ENCODE measurements at regions of chr10 and their contacts with region 1.

Region 1: DNA sequence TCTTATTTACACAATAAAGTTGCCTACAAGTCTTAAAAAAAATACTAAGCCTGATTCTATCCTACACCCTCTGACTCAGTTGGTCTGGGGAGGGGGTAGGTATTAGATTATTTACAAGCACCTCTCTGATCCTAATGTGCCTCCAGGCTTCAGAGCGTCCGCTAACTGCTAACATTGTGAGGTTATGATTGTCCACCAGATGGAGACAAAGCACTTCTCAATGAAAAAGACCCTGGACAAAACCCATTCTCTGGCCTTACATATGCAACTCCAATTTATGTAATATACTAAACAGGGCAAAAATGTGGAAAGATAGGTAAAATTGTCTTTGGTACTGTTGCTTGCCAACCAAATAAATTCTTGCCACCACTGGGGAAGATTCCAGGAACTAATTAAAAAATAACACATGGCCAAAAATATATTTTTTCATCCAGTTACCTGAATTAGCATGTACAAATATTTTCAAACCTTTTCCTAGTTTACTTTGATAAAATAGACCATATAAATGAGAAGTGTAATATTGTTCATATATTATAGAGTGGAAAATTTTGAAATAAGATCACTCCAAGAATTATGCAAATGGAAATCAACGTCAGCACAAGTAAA is 92.4 kb downstream of the KIF20B start:
- DNase-seq: no peak

Region 2: GRCh38 chr10:89751231-89751630 is 42.5 kb before region 1 on chr10:
- intact Hi-C with region 1: no loop called
- DNase-seq: no peak

Region 3: DNA sequence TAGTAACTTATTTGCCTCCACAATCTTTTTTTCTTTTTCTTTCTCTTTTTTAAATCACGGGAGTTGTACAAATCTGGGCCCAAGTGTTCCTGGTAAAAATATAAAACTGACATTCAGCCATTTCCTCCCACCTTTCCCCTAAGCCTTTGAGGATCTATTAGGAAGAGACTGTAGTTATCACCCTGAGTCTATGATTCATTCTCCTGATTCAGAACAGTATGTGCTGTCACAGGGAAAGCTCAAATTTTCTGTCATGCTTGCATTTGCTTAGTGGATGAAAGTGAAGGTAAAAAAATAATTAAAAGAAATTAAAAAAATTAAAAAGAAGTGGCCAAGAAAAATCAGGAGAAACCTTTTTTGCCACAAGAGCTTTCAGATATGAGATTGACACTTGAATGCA is 20.7 kb before region 1 on chr10:
- intact Hi-C with region 1: no loop called
- DNase-seq: no peak

Region 4: DNA sequence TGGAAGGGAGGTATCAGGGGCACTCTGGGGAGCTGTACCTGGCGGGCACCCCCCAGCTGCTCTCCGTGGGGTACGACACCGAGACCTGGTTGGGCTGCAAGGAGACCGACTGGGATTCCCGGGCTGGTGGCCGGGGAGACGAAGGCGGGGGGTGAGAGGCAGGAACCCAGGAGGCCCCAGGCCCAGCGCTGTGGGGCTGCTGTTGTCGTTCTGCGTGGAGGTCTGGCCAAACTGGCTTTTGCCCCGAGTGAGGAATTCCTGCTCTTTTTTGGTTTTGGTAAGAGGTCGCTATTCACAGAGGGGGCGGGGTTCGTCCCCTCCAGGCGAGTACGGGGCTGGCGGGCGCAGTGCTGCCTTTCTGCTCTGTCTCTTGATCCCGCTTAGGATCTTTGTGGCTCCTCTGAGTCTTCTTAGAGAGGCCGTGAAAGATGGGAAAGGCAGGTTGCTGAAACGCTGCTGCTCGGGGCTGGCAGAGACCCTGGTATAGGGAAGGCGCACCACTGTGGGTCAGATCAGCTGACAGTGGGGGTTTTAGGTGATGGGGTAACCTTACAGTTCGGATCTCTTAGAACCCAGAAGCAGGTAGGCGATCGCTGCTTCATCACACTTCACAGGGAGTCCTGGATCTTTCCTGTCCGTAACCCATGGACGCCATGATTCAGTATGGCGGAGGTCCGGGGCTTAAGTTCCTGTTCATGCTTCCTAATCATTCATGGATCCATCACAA is 44.3 kb after region 1 on chr10:
- intact Hi-C with region 1: no loop called
- DNase-seq: peak; percentile 81

Region 5: DNA sequence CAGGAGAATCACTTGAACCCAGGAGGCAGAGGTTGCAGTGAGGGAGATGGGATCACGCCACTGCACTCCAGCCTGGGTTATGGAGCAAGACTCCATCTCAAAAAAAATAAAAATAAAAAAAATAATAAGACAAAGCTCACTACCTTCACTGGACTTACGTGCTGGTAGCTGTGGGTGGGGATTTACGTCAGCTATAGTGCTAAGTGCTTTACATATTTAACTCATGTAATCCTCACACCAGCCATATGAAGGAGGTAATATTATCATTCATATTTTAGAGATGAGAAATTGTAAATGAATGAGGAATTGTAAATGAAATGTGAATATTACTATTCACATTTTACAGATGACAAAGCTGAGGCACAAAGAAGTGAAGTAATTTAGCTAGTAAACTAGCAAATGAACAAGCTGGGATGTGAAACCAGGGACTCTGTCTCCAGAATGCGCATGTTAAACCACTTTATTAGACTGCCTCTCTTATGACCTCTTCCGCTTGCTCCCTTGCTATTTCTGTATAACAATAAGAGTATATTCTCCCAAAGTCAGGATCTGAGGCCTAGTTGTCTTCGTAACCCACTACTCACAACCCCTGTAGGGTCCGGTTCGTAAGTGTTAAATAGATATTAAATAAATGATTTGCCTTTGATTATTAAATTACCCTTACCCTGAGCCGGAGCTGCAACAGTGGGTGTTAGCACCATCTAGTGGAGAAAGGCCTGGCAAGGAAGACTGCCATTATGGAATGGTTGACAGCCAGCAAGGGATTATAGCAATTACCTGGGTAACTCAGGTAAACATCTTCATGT is 993.8 kb after region 1 on chr10:
- intact Hi-C with region 1: loop called in 1 of 2 experiments (anchors 10 kb)
- DNase-seq: no peak

Region 6: DNA sequence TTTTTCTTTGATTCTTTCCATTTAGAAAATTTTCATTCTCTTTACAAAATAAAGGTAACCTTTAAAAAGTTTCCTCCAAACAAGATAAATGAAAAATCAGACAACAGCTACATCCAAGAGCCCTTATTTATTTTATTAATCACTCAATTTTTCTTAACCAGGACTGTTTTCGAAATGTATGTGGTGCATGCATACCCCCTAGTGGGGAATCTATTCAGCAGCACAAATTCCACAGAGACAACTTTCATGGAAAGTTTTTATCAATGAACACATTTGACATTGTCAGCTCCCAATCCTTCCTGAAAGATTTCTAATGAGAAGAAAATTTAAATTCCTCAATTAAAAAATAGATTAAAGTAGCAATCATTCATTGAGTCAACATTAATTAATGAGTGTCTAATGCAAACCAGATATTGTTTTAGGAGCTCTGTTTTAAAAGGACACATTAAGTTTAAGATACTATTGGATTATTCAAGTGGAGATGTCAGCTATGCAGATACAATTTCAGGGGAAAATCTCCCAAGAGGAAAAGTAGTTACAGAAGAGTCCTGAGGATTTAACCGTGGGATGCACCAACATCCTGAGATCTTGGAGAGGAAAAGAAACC is 1069.3 kb after region 1 on chr10:
- intact Hi-C with region 1: loop called in 1 of 2 experiments (anchors 10 kb)
- DNase-seq: no peak

Measured in posterior vena cava (tissue), 2 donors.